HEK293 (cell line): ENCODE measurements at regions of chr15 and their contacts with region 1.

Region 1: DNA sequence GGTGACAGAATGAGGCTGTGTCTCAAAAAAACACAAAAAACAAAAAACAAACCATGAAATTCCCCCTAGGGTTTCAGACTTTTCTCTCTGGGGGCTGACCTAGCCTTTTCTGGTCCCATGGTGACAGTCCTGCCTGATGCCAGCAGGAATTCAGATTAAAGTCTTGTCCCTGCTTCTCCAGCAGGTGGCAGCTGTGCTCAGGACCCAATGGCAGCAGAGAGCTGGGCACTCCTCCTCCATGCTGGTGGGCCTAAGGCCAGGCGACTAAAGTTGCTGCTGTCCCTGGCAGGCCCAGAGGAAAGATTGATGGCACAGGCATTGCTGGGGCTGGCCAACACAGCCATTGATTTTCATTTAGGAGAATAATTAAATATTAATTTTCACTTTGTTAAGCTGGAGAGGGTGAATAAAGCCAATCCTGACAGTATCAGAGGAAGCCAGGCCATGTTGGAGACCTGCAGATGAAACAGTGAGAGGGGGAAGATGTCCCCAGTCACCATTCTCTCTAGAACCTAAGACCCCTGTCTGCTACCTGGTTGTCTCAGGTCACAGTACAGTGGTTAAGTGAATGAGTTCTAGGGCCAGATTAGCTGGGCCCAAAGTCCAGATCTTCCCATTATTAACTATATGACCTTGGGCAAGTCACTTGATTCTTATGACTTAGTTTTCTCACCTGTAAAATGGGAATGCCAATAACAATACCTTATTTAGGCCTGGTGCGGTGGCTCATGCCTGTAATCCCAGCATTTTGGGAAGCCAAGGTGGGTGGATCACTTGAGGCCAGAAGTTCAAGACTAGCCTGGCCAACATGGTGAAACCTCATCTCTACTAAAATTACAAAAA is 7.1 kb downstream of the CELF6 start:
- H3K4me3 ChIP-seq: no peak overlapping the region
- H3K27ac ChIP-seq: no peak overlapping the region
- H3K4me1 ChIP-seq: no peaks in the 10 kb centered on the region
- CTCF ChIP-seq: peak; percentile 82

Region 2: DNA sequence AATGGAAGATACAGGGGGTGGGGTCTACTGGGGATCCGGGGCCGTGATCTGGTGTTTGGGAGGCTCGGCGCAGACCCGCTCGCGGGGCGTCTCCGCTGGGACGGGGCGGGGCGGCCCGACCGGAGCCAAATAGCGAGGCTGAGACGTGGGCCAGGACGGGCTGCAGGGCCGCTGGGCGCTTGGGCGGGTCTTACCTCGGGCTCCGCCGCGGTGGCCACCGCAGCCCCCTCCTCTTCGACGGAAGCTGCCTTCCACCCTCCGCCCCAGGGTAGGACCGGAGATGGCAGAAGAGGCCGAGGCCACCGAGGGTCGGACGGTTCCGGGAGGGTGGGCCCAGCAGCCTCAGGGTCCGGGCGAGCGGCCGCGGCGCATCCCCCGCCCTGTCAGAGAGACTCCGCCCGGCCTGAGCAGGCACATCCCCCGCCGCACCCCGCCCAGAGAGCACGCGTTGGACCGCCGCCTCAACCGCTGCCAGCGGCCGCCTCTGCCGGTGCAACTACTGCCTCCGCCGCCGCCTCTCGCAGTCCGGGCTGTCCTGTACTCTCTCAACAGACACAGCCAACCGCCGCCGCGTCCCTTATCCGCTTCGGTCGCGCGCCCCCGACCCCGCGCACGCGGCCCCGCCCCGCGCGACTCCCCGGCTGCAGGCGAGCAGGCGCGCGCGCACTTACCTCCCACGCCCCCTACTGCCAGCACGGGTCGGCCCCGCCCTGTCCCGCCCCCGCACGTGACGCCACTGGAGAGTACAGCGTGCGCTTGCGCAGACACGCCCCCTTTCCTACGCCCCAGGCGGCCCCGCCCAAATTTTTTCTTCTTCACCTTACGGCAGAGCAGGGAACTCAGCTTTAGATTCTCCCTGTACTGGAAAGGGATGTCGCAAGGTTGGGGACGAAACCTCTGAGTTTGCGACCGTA is 195.1 kb before region 1 on chr15 and contains the start of gene MYO9A:
- CTCF ChIA-PET with region 1: no interaction called
- POLR2A ChIA-PET with region 1: no interaction called
- H3K4me3 ChIP-seq: peak within 1 kb of the TSS; percentile 98
- H3K27ac ChIP-seq: peak within 1 kb of the TSS; percentile 96
- H3K4me1 ChIP-seq: peaks cover 31% of the 10 kb centered on the region
- CTCF ChIP-seq: peak; percentile 63

Region 3: GRCh38 chr15:72339777-72340177 is 27.0 kb after region 1 on chr15:
- CTCF ChIA-PET with region 1: interaction called, 24 read pairs
- POLR2A ChIA-PET with region 1: no interaction called
- H3K4me3 ChIP-seq: no peak overlapping the region
- H3K27ac ChIP-seq: no peak overlapping the region
- H3K4me1 ChIP-seq: peaks cover 6% of the 10 kb centered on the region
- CTCF ChIP-seq: no peak

Region 4: GRCh38 chr15:72358650-72359288 is 45.9 kb after region 1 on chr15:
- CTCF ChIA-PET with region 1: no interaction called
- POLR2A ChIA-PET with region 1: no interaction called
- H3K4me3 ChIP-seq: no peak overlapping the region
- H3K27ac ChIP-seq: no peak overlapping the region
- H3K4me1 ChIP-seq: peaks cover 3% of the 10 kb centered on the region
- CTCF ChIP-seq: no peak